K562 (cell line): ENCODE measurements at regions of chr19 and their contacts with region 1.

Region 1: DNA sequence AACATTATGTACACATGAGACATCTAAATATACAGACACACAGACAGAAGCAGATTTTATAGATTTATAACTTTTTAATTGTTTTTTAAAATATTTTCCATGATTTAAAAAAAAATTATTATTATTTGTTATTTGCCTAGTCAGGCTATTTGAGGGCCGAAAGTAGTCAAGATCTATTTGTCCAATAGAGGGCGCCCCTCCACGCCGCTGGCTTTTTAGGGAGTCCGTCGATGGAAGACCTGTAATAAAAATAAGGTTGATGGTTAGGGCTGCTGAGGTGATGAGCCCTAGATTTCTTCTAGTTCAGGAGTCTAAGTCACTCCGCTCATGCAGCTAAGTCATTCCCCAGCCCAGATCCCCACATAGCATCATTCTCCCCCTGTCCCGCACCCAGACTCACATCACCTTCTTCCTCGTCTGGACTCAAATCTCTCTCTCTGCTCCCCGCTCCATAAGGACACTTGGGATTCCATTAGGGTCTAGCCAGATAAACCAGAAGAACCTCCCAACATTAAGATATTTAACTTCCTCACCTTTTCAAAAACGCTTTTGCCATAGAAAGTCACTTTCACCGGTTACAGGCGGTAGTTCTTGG is 33.9 kb upstream of the CEACAM21 start:
- DNase-seq: peak; percentile 44 to 76 (median 48)
- ATAC-seq: peak; percentile 69
- H3K4me3 ChIP-seq: no peak overlapping the region
- H3K27ac ChIP-seq: no peak overlapping the region
- H3K4me1 ChIP-seq: peaks cover 0 to 3% of the 10 kb centered on the region in 2 experiments; a peak in 2 of 5 replicates
- H3K27me3 ChIP-seq: peaks cover 2 to 11% of the 10 kb centered on the region in 2 experiments; a peak in 2 of 5 replicates
- CTCF ChIP-seq: peak; percentile 72 to 78 (median 72)
- EP300 ChIP-seq: no peak
- POLR2A ChIP-seq: no peak
- RAD21 ChIP-seq: peak; percentile 39 to 45

Region 2: GRCh38 chr19:41479757-41480191 is 62.3 kb before region 1 on chr19:
- CTCF ChIA-PET with region 1: no interaction called
- POLR2A ChIA-PET with region 1: no interaction called
- in situ Hi-C with region 1: no loop called
- intact Hi-C with region 1: no loop called
- DNase-seq: peak; percentile 30 to 58 (median 36)
- ATAC-seq: peak; percentile 93
- H3K4me3 ChIP-seq: no peak overlapping the region
- H3K27ac ChIP-seq: no peak overlapping the region; the same call in 2 of the 3 replicates
- H3K4me1 ChIP-seq: peaks cover 0 to 7% of the 10 kb centered on the region in 2 experiments; a peak in 3 of 5 replicates
- H3K27me3 ChIP-seq: peaks cover 3 to 18% of the 10 kb centered on the region in 2 experiments; a peak in 3 of 5 replicates
- CTCF ChIP-seq: no peak
- EP300 ChIP-seq: no peak
- POLR2A ChIP-seq: no peak
- RAD21 ChIP-seq: no peak

Region 3: DNA sequence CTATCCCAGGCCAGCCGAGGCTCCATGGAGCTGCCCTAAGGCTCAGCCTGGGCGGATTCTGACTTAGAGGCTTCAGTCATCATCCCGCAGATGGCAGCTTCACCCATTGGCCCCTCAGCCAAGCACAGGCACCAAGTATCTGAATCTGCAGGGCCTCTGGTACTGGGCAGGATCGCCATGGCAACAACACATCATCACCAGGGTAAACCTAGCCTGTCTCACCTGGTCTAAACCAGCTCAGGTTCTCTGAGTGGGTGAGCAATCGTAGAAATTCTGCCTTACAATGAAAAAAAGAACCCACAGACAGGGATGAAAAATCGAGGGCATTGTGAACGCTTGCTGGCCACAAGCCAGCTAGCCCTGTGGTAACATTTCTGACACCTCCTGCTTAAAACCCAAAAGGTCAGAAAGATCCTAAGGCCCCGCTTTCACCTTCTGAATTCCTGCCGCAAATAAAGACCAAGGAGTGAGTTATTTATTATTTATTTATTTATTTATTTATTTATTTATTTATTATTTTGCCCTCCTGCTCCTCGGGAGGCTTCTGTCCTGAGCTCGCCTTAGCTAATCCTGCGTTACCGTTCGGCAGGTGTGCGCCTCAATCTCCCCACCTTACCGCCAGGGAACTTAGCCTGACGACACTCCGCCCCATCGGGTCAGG is 21.9 kb after region 1 on chr19:
- CTCF ChIA-PET with region 1: interaction called, 3 read pairs
- POLR2A ChIA-PET with region 1: no interaction called
- in situ Hi-C with region 1: no loop called
- intact Hi-C with region 1: loop called (anchors 1 kb)
- DNase-seq: no peak
- ATAC-seq: no peak; the same call in 1 of the 3 replicates
- H3K4me3 ChIP-seq: no peak overlapping the region
- H3K27ac ChIP-seq: no peak overlapping the region
- H3K4me1 ChIP-seq: peaks cover 0 to 9% of the 10 kb centered on the region in 2 experiments; a peak in 2 of 5 replicates
- H3K27me3 ChIP-seq: peaks cover 9 to 20% of the 10 kb centered on the region in 2 experiments; a peak in 3 of 5 replicates
- CTCF ChIP-seq: no peak
- EP300 ChIP-seq: no peak
- POLR2A ChIP-seq: no peak
- RAD21 ChIP-seq: no peak

Region 4: GRCh38 chr19:41570639-41571112 is 28.6 kb after region 1 on chr19:
- CTCF ChIA-PET with region 1: interaction called, 10 read pairs
- POLR2A ChIA-PET with region 1: no interaction called
- in situ Hi-C with region 1: no loop called
- intact Hi-C with region 1: no loop called
- DNase-seq: peak; percentile 76 to 88 (median 80)
- ATAC-seq: peak; percentile 100
- H3K4me3 ChIP-seq: no peak overlapping the region
- H3K27ac ChIP-seq: no peak overlapping the region
- H3K4me1 ChIP-seq: no peaks in the 10 kb centered on the region
- H3K27me3 ChIP-seq: peaks cover 0 to 11% of the 10 kb centered on the region in 2 experiments; a peak in 1 of 5 replicates
- CTCF ChIP-seq: peak; percentile 90 to 92 (median 92)
- EP300 ChIP-seq: no peak
- POLR2A ChIP-seq: no peak
- RAD21 ChIP-seq: peak; percentile 75 to 86

Region 5: DNA sequence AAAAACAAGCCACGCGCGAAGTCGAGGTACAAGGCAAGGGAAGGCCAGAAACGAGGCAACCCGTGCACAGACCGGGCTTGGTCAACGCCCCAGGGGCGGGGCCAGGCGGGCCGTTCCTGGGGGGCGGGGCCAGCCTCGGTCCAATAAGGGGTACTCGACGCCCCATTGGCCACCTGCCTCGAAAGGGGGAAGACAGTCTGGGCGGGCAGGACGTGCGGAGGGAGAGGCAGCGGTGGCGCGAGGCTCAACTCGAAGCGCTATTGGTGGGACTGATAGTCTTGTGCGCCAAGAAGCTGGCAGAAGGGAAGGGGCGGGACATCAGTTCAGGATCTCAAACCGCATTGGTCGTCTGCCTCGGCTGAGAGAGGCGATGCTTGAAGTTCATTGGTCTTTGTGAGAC is 302.5 kb after region 1 on chr19 and contains the start of gene LYPD4:
- CTCF ChIA-PET with region 1: interaction called, 10 read pairs
- POLR2A ChIA-PET with region 1: no interaction called
- in situ Hi-C with region 1: no loop called
- intact Hi-C with region 1: no loop called
- DNase-seq: peak in 3 of 4 experiments; percentile 51 to 65 (median 55)
- ATAC-seq: peak; percentile 69
- H3K4me3 ChIP-seq: no peak within 1 kb of the TSS
- H3K27ac ChIP-seq: no peak within 1 kb of the TSS
- H3K4me1 ChIP-seq: peaks cover 22 to 31% of the 10 kb centered on the region in 2 experiments; a peak in 4 of 5 replicates
- H3K27me3 ChIP-seq: no peaks in the 10 kb centered on the region
- CTCF ChIP-seq: no peak
- EP300 ChIP-seq: no peak
- POLR2A ChIP-seq: no peak
- RAD21 ChIP-seq: no peak
- polyA plus RNA-seq, gene LYPD4: 0.11 TPM in 1 of 2 experiments, not detected in the other